BJ (cell line): ENCODE measurements at regions of chr21 and their contacts with region 1.

Region 1: DNA sequence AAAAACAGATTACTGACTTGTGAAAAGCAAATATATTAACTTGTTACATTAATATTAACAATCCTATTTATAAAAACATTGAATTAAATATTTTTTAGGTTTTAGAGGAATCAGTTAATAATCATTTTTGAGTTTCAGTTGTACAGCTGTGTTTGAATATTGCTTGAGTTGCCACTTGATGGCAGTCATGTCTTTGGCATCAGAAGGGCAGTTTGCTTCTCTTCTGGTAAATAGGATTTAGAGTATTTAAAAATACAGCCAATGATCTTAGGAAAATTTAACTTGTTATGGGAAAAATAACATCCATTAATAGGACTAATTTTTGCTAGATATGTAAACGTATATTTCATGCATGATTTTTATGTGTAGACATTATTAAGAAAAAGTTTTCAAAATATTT is 234.1 kb downstream of the NCAM2 start:
- DNase-seq: peak; percentile 3
- H3K4me3 ChIP-seq: no peak overlapping the region
- H3K27me3 ChIP-seq: no peaks in the 10 kb centered on the region
- CTCF ChIP-seq: peak; percentile 39; the same call in 1 of the 2 replicates

Region 2: DNA sequence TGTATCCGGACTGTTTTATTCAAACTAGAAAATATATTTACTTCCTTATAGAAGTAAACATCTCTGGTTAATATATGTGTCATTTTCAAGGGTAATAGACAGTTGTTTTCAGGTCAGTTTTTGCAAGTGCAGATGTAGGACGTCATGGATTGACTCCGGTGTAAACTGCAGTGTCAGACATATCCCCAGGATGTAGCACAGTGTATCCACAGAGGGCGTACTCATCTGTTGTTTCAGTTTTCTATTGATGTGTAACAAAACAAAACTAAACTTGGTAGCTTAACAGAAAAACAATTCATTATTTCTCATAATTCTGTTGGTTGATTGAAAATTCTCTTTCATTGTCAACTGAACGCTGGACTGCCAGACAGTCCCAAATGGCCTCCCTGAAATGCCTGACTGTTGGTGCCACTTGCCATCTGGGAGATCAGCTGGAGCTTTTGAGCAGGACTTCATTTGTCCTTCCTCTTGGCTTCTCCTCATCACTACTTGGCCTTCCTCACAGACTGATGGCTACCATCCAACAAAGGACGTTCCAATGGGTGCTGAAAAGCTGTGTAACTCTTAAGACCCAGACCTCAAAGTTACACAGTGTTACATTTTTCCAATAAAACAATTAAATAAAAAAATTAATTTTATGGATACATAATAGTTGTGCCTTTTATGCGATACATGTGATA is 52.6 kb before region 1 on chr21:
- CTCF ChIA-PET with region 1: no interaction called
- POLR2A ChIA-PET with region 1: no interaction called
- DNase-seq: no peak
- H3K4me3 ChIP-seq: no peak overlapping the region
- H3K27me3 ChIP-seq: no peaks in the 10 kb centered on the region
- CTCF ChIP-seq: no peak

Region 3: DNA sequence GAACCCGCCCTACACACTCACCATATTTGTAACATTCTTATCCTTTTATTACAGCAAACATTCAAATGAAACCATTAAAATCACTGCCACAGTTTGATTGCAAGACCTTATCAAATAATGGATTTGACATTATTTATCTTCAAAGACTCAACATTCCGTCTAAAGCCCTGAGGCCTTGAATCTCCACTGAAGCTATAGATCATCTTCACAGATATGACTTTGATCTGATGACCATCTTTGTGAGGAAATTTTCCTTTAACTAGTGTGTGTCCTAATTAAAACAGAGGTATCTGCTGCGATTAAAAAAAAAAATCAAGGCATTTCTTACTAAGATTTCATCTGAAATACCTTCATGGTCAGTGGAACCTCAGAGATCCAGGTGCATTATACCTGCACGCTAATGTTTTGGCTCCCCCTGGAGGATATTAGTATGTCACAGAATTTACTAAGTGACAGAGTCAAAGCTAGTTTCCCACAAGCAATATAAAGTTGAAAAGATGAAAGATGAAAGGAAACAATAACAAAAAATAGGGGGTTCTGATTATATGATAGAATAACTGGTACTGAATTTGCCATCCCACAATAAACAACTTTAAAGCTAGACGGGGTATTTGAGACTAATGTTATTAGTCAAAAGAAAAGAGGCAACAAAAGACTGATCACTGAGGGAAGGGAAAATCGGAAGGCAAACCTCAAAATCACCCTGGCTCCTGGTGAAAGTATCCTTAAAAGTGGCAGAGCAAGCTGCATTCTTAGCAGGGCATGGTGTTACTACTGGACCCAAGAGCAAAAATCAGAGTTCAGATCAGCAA is 689.3 kb after region 1 on chr21:
- CTCF ChIA-PET with region 1: interaction called, 11 read pairs
- POLR2A ChIA-PET with region 1: no interaction called
- DNase-seq: no peak
- H3K4me3 ChIP-seq: no peak overlapping the region
- H3K27me3 ChIP-seq: no peaks in the 10 kb centered on the region
- CTCF ChIP-seq: peak; percentile 47